ENCODE measurements at regions of chr15 and their contacts with region 1.

Region 1: DNA sequence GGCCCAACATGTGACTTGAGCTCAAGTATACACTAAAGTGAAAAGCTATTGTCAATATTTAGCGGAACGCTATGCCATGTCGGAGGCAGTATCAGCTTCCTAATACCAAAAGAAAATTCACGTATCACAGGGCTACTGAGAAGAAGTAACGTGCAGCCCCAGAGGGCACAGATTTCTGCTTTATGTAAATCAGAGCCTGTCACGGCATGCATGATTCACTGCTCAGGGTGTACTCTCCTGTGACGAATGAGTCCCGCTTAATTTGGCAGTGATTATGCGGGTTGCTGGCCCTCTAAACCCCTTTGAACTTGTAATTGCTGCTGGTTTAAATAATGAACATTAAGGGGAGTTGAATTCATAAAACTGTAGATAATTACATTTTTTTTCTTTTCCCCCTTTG is 85.3 kb downstream of the MEIS2 start:
- DNase-seq: peak in 28 of 42 donors; percentile 22 to 85 (median 53)

Region 2: GRCh38 chr15:36856339-36856973 is 158.6 kb before region 1 on chr15:
- intact Hi-C with region 1: no loop called
- DNase-seq: no peak

Region 3: DNA sequence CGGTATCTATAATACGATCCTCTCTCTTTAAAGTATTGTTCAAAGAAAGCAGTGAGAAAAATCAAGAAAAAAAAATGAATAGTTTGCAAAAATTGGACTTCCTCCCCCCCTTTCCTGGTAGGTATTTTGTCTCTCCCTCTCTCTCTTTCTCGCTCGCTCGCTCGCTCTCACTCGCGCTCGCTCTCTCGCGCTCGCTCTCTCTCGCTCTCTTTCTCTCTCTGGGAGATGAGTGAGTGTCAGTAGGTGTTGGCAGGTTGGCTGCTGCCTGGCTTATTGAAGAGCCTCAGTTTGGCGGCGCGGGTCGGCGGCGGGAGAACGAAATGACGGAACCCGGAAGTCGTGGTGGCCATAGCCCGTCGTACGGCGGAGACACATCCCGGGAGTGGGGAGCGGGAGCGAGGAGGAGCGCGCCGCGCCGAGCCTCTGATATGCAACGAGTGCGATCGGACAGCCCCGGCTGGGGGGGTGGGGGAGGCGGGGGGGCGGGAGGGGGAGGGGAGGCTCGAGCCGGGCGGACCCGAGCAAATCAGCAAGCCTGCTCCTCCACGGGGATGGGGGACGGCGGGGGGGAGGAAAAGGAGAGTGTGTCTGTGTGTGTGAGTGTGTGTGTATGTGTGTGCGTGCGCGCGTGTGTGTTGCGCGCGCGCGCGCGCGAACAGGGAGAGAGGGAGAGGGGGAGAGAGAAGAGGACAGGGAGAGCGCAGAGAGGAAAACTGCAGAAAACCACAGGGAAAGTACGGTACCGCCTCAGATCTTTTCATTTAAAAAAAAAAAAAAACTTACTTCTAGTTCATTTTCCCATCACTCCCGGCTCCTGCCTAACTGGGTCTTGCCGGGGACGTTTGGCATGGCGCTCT is 85.3 kb after region 1 on chr15 and contains the start of gene MEIS2:
- intact Hi-C with region 1: loop called (anchors 5 kb)
- DNase-seq: peak; percentile 83 to 96 (median 91)